Mammary epithelial cell (primary cell): ENCODE measurements at regions of chr1 and their contacts with region 1.

Region 1: GRCh38 chr1:202221911-202222909 is 28.6 kb downstream of the LGR6 start:
- DNase-seq: peak; percentile 78
- H3K4me3 ChIP-seq: no peak overlapping the region
- H3K27ac ChIP-seq: no peak overlapping the region
- H3K4me1 ChIP-seq: peaks cover 19% of the 10 kb centered on the region
- H3K27me3 ChIP-seq: no peaks in the 10 kb centered on the region
- CTCF ChIP-seq: no peak

Region 2: DNA sequence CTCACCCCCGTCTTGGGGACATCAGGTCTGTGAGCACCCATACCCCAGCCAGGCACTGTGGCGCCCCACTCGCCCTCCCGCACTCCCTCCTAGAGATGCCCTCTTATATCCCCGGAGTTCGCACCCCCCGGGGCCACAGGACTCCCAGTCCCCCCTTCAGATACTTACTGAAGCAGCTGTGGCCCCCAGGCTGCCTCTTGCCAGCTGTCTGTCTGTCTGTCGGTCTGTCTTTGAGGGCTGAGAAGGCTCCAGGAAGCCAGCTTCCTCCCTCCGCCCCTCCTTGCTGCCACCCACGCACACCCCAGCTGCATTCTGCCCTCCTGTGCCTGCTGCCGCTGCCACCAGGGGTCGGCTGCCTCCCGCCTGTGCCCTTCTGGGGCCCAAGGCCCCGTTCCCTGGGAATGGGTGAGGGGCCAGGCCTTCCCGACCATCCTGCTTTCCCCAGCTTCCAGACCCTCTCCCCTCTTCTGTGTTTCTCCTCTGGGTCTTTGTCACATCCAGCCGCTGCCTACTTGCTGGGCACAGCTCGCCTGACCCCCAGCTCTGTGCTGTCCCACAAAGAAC is 61.8 kb before region 1 on chr1 and contains the start of gene PTPN7:
- CTCF ChIA-PET with region 1: no interaction called
- dilution Hi-C with region 1: loop called (anchors 5 kb)
- in situ Hi-C with region 1: no loop called
- intact Hi-C with region 1: no loop called
- DNase-seq: no peak
- H3K4me3 ChIP-seq: no peak within 1 kb of the TSS
- H3K27ac ChIP-seq: no peak within 1 kb of the TSS
- H3K4me1 ChIP-seq: peaks cover 2% of the 10 kb centered on the region
- H3K27me3 ChIP-seq: no peaks in the 10 kb centered on the region
- CTCF ChIP-seq: no peak
- total RNA-seq, gene PTPN7: not detected

Region 3: GRCh38 chr1:202235856-202236837 is 13.9 kb after region 1 on chr1:
- CTCF ChIA-PET with region 1: no interaction called
- dilution Hi-C with region 1: no loop called
- in situ Hi-C with region 1: no loop called
- intact Hi-C with region 1: loop called (anchors 2 kb)
- DNase-seq: peak; percentile 89
- H3K4me3 ChIP-seq: no peak overlapping the region
- H3K27ac ChIP-seq: peak overlapping the region; percentile 45
- H3K4me1 ChIP-seq: peaks cover 36% of the 10 kb centered on the region
- H3K27me3 ChIP-seq: no peaks in the 10 kb centered on the region
- CTCF ChIP-seq: peak; percentile 84 to 85

Region 4: GRCh38 chr1:202283379-202283844 is 61.2 kb after region 1 on chr1:
- CTCF ChIA-PET with region 1: no interaction called
- dilution Hi-C with region 1: loop called (anchors 10 kb)
- in situ Hi-C with region 1: no loop called
- intact Hi-C with region 1: loop called (anchors 2 kb)
- DNase-seq: peak; percentile 87
- H3K4me3 ChIP-seq: no peak overlapping the region
- H3K27ac ChIP-seq: peak overlapping the region; percentile 31
- H3K4me1 ChIP-seq: peaks cover 61% of the 10 kb centered on the region
- H3K27me3 ChIP-seq: no peaks in the 10 kb centered on the region
- CTCF ChIP-seq: no peak